Calu3 (cell line): ENCODE measurements at regions of chr6 and their contacts with region 1.

Region 1: DNA sequence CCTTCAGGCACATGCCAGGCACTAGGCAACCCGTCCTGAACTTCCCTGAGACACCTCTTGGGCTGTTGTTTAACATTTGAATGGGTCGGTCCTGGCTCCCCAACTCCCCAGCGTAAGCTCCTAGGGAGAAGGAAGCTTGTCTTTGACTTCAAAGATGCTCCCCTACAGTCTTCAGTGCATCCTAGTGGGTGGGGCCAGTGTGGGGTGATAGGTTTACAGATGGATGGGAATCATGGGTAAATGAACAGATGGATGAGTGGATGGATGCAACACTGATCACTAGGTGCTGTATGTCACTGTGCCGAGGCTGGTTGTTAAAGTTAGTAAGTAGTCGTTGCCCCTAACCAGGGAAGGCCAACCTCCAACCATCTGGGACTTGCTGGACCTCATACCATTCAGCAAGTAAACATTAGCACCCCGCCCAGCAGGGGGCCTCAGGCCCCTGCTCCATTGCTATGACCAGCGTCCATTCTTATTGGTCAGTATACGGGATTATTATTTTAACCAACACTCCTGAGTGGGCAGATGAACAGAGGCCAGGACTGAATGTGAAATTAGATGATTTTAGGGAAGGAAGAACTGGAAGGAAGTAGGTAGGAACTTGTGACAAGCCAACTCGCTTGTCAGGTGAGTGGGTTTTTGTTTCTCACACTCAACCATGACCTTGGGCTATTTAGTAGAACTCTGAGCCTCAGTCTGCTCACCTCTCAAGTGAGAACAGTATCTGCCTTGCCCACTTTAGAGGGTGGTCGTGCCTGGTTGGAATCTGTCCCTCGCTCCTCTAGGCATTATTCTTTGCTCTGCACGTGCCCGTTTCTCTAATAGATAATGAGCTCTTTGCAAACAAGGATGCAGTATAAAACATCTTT is 82.9 kb upstream of the FOXP4 start:
- DNase-seq: peak; percentile 83
- H3K4me3 Mint-ChIP-seq: no peak overlapping the region
- H3K27ac Mint-ChIP-seq: peak overlapping the region; percentile 0
- H3K4me1 Mint-ChIP-seq: peaks cover 8% of the 10 kb centered on the region
- H3K27me3 Mint-ChIP-seq: peaks cover 76% of the 10 kb centered on the region
- CTCF ChIP-seq: peak; percentile 77

Region 2: GRCh38 chr6:41591859-41592502 is 128.7 kb after region 1 on chr6:
- CTCF ChIA-PET with region 1: no interaction called
- intact Hi-C with region 1: loop called (anchors 1 kb)
- DNase-seq: peak; percentile 85
- H3K4me3 Mint-ChIP-seq: no peak overlapping the region
- H3K27ac Mint-ChIP-seq: no peak overlapping the region
- H3K4me1 Mint-ChIP-seq: no peaks in the 10 kb centered on the region
- H3K27me3 Mint-ChIP-seq: no peaks in the 10 kb centered on the region
- CTCF ChIP-seq: peak; percentile 96